ENCODE measurements at regions of chr7 and their contacts with region 1.

Region 1: DNA sequence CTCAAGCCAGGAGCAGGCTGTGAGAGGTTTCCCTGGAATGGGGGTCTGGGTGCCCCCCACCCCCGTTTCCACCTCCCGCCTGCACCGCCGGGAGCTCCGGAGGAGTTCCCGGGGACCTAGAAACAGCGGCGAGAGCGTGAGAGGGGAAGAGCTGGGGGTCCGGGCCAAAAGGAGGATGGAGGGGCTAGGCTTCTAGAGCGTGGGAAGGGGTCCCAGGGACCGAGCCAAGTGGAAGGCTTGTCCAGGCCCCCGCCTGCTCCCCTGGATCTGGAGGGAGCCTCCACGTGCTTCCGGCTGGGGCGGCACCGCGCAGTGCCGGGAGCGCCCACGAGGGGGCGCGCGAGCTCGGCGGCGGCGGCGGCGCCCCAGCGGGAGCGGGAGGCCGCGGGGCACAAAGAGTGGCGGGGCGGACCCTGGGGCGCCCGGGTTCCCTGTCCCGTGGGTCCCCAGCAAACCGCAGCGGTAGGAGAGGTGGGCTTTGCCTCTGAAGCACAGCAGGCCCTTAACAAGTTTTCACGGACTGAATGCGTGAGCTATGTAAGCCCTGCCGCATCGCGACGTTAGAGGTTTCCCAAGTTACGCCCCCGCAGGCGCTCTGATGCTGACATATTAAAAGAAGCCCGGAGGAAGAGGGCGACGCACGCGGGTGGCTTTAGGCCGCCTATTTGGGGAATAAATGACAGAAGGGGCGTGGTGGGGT is 104.4 kb upstream of the LRRC4 start:
- DNase-seq: peak; percentile 79
- H3K4me3 ChIP-seq: peak overlapping the region; percentile 64
- H3K27ac ChIP-seq: peak overlapping the region; percentile 55
- H3K4me1 ChIP-seq: peaks cover 7% of the 10 kb centered on the region
- H3K27me3 ChIP-seq: peaks cover 43% of the 10 kb centered on the region
- CTCF ChIP-seq: peak; percentile 70

Region 2: DNA sequence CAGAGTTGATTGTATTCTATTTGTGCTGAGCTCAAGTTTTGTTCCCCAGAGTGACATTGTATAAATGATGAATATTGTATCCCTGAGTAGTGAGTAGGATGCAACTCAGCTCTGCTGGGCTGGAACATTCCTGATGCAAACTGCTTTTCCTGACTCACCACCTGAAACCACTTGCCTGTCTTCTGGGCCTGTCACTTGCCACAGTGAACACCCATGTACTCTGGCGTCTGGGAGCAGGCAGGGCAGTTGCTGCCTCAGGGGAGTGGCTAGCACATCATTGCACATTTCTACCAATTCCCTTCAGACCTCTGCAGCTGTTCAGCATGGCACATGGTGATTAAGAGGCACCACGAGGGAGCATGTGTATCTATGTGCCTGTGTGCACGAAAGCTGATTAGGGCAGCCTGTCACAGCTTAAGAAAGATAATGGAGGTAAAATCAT is 326.4 kb before region 1 on chr7:
- CTCF ChIA-PET with region 1: no interaction called
- POLR2A ChIA-PET with region 1: no interaction called
- intact Hi-C with region 1: no loop called
- DNase-seq: peak; percentile 60
- H3K4me3 ChIP-seq: no peak overlapping the region
- H3K27ac ChIP-seq: no peak overlapping the region
- H3K4me1 ChIP-seq: peaks cover 22% of the 10 kb centered on the region
- H3K27me3 ChIP-seq: no peaks in the 10 kb centered on the region
- CTCF ChIP-seq: no peak

Region 3: GRCh38 chr7:127943541-127944521 is 191.8 kb before region 1 on chr7:
- CTCF ChIA-PET with region 1: no interaction called
- POLR2A ChIA-PET with region 1: no interaction called
- intact Hi-C with region 1: no loop called
- DNase-seq: peak; percentile 78
- H3K4me3 ChIP-seq: no peak overlapping the region
- H3K27ac ChIP-seq: no peak overlapping the region
- H3K4me1 ChIP-seq: peaks cover 16% of the 10 kb centered on the region
- H3K27me3 ChIP-seq: no peaks in the 10 kb centered on the region
- CTCF ChIP-seq: no peak

Region 4: GRCh38 chr7:127968547-127968946 is 167.1 kb before region 1 on chr7:
- CTCF ChIA-PET with region 1: no interaction called
- POLR2A ChIA-PET with region 1: no interaction called
- intact Hi-C with region 1: no loop called
- DNase-seq: no peak
- H3K4me3 ChIP-seq: no peak overlapping the region
- H3K27ac ChIP-seq: no peak overlapping the region
- H3K4me1 ChIP-seq: no peaks in the 10 kb centered on the region
- H3K27me3 ChIP-seq: no peaks in the 10 kb centered on the region
- CTCF ChIP-seq: no peak

Region 5: DNA sequence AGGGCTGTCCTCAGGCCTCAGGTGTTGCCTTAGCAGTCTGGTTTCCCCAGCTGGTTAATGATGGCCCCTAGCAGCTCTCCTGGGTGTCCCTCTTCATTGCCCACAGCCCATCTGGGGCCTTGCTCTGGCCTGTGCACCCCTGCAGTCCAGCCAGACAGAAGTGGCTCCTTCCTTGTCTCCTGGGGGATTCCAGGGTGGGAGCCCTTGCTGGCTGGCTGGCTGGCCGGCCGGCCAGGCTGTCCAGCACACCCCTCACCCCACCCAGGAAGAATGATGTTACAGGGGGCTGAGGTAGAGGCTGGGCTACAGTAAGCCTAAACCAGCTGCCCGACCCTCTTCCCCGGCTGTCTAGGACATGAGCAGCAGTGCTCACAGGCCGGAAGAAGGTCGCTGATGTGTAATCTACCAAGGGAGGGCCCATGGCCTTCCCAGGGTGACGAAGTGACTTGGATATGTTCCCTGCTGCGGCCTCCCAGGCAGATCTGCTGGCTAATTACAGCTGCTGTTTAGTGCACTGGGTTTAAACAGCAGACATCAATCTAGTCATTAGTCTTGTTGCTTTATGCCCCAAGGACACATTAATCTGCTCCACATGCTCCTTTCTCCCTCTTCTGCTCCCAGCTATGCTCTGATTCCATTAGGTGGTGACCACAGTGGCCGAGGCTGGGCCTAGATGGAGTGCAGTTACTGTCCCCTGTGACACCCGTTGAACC is 50.6 kb before region 1 on chr7:
- CTCF ChIA-PET with region 1: interaction called, 14 read pairs
- POLR2A ChIA-PET with region 1: no interaction called
- intact Hi-C with region 1: no loop called
- DNase-seq: no peak
- H3K4me3 ChIP-seq: no peak overlapping the region
- H3K27ac ChIP-seq: no peak overlapping the region
- H3K4me1 ChIP-seq: no peaks in the 10 kb centered on the region
- H3K27me3 ChIP-seq: no peaks in the 10 kb centered on the region
- CTCF ChIP-seq: no peak

Region 6: GRCh38 chr7:128266883-128267607 is 131.4 kb after region 1 on chr7:
- CTCF ChIA-PET with region 1: no interaction called
- POLR2A ChIA-PET with region 1: no interaction called
- intact Hi-C with region 1: no loop called
- DNase-seq: peak; percentile 95
- H3K4me3 ChIP-seq: peak overlapping the region; percentile 42
- H3K27ac ChIP-seq: peak overlapping the region; percentile 94
- H3K4me1 ChIP-seq: peaks cover 37% of the 10 kb centered on the region
- H3K27me3 ChIP-seq: no peaks in the 10 kb centered on the region
- CTCF ChIP-seq: peak; percentile 45; the same call in 1 of the 2 replicates